Activated B cell treated with CpG ODN at 0.5 μM for 24 hours (primary cell): ENCODE measurements at regions of chr13 and their contacts with region 1.

Region 1: GRCh38 chr13:77065461-77066147 is 38.6 kb upstream of the FBXL3 start:
- DNase-seq: no peak
- ATAC-seq: peak; percentile 25
- H3K4me3 Mint-ChIP-seq: no peak overlapping the region
- H3K27ac Mint-ChIP-seq: peak overlapping the region; percentile 81
- H3K4me1 Mint-ChIP-seq: peaks cover 17% of the 10 kb centered on the region
- H3K27me3 Mint-ChIP-seq: no peaks in the 10 kb centered on the region
- CTCF ChIP-seq: no peak

Region 2: DNA sequence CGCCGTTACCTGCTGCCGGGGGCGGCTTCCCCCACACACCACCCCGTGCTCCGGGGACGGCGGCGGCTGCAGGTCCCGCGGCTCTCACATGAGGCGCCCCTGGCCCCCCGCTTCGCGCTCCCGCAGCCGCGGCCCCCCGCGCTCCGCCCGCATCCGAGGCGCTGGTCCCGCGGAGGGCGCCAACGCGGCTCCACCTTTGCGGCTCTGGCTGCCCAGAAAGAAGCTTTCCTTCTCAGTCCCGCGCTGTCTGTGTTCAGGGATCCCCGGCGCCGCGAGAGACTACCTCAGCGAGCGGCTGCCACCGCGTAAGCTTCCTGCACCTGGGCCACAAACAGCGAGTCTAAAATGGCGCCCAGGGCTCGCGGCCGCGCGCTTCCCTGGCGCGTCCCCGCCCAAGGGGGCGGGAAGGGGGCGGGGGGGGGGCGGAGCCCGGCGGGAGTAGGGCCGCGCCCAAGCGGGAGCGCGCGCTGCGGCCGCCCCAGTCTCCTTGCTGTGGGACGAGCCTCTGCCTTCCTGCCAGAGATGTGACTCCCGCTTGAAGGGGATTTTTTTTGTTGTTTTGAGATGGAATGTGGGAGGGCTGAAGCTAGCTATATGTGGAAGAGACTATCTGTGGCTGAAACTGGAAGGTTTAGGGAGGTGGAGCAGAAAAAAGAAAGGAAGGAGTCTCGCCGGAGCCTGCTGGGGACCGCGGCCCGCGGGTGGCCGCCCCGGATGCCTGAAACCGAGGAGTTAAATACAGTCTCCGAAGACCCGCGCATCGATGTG is 38.6 kb before region 1 on chr13 and contains the start of gene FBXL3:
- CTCF ChIA-PET with region 1: no interaction called
- POLR2A ChIA-PET with region 1: interaction called, 3 read pairs
- intact Hi-C with region 1: loop called (anchors 2 kb)
- DNase-seq: peak; percentile 73
- ATAC-seq: peak; percentile 59
- H3K4me3 Mint-ChIP-seq: peak within 1 kb of the TSS; percentile 98
- H3K27ac Mint-ChIP-seq: peak within 1 kb of the TSS; percentile 96
- H3K4me1 Mint-ChIP-seq: peaks cover 54% of the 10 kb centered on the region
- H3K27me3 Mint-ChIP-seq: no peaks in the 10 kb centered on the region
- CTCF ChIP-seq: no peak
- total RNA-seq, gene FBXL3: 46.2 and 49.8 TPM in 2 replicates

Region 3: GRCh38 chr13:77050851-77051250 is 14.8 kb before region 1 on chr13:
- CTCF ChIA-PET with region 1: interaction called, 3 read pairs
- POLR2A ChIA-PET with region 1: no interaction called
- intact Hi-C with region 1: loop called (anchors 2 kb)
- DNase-seq: no peak
- ATAC-seq: no peak
- H3K4me3 Mint-ChIP-seq: no peak overlapping the region
- H3K27ac Mint-ChIP-seq: peak overlapping the region; percentile 15
- H3K4me1 Mint-ChIP-seq: peaks cover 10% of the 10 kb centered on the region
- H3K27me3 Mint-ChIP-seq: no peaks in the 10 kb centered on the region
- CTCF ChIP-seq: no peak

Region 4: DNA sequence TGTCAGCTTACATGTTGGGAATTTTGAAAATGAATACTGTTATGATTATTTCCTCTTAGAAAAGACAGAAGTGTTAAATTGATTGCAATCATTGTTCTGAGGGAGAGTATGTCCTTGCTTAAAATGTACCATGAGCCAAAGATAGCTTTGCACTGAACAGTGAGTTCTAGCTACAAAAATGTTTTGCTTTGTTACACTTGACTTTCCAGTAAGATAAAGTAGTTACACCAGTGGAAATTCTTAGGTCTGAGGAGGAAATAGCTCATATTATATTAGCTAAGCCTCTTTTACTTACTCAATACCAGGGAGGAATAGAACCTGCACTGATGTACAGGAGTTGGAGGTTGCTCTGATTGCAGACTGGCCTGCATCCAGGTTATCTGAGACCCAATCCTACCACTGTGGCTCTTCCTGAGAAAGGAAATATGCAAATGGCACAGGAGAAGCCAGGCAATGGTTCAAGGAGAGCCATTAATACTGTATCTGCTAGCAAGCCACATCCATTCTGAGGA is 14.4 kb after region 1 on chr13:
- CTCF ChIA-PET with region 1: no interaction called
- POLR2A ChIA-PET with region 1: no interaction called
- intact Hi-C with region 1: loop called (anchors 2 kb)
- DNase-seq: no peak
- ATAC-seq: no peak
- H3K4me3 Mint-ChIP-seq: no peak overlapping the region
- H3K27ac Mint-ChIP-seq: no peak overlapping the region
- H3K4me1 Mint-ChIP-seq: no peaks in the 10 kb centered on the region
- H3K27me3 Mint-ChIP-seq: no peaks in the 10 kb centered on the region
- CTCF ChIP-seq: no peak